ENCODE measurements at regions of chr10 and their contacts with region 1.

Region 1: GRCh38 chr10:29245476-29245875 is 43.4 kb upstream of the LYZL1 start:
- DNase-seq: no peak

Region 2: DNA sequence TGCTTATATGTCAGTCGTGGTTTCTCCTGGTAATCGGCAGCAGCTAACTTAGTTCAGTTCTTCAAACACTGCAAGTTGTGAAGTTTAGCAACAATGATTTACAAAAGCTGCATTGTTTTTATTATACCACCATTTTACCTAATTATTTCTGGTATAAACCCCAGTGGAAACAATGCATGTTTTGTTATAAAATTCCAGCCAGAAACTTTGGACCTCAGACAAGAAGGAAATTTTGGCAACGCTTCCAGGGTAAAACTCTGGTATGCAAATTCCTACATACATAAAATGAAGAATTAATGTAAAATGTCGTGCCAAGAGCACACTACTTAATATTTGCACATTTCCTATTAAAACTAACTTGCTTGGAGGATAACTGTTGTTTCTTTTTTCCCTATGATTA is 234.0 kb before region 1 on chr10:
- intact Hi-C with region 1: no loop called
- DNase-seq: no peak

Region 3: GRCh38 chr10:30284865-30285594 is 1039.6 kb after region 1 on chr10:
- intact Hi-C with region 1: loop called in 1 of 2 experiments (anchors 5 kb)
- DNase-seq: no peak